ENCODE measurements at regions of chr7 and their contacts with region 1.

Region 1: GRCh38 chr7:79434867-79435266 is 18.6 kb downstream of the MAGI2 start:
- DNase-seq: peak; percentile 43
- H3K4me3 ChIP-seq: no peak overlapping the region
- H3K27ac ChIP-seq: no peak overlapping the region
- H3K4me1 ChIP-seq: no peaks in the 10 kb centered on the region
- H3K27me3 ChIP-seq: no peaks in the 10 kb centered on the region
- CTCF ChIP-seq: no peak
- POLR2A ChIP-seq: no peak

Region 2: GRCh38 chr7:79317728-79318127 is 117.1 kb before region 1 on chr7:
- CTCF ChIA-PET with region 1: no interaction called
- POLR2A ChIA-PET with region 1: no interaction called
- dilution Hi-C with region 1: no loop called
- intact Hi-C with region 1: loop called (anchors 5 kb)
- DNase-seq: peak; percentile 77
- H3K4me3 ChIP-seq: no peak overlapping the region
- H3K27ac ChIP-seq: no peak overlapping the region
- H3K4me1 ChIP-seq: peaks cover 8% of the 10 kb centered on the region
- H3K27me3 ChIP-seq: no peaks in the 10 kb centered on the region
- CTCF ChIP-seq: no peak
- POLR2A ChIP-seq: no peak